ENCODE measurements at regions of chr2 and their contacts with region 1.

Region 1: DNA sequence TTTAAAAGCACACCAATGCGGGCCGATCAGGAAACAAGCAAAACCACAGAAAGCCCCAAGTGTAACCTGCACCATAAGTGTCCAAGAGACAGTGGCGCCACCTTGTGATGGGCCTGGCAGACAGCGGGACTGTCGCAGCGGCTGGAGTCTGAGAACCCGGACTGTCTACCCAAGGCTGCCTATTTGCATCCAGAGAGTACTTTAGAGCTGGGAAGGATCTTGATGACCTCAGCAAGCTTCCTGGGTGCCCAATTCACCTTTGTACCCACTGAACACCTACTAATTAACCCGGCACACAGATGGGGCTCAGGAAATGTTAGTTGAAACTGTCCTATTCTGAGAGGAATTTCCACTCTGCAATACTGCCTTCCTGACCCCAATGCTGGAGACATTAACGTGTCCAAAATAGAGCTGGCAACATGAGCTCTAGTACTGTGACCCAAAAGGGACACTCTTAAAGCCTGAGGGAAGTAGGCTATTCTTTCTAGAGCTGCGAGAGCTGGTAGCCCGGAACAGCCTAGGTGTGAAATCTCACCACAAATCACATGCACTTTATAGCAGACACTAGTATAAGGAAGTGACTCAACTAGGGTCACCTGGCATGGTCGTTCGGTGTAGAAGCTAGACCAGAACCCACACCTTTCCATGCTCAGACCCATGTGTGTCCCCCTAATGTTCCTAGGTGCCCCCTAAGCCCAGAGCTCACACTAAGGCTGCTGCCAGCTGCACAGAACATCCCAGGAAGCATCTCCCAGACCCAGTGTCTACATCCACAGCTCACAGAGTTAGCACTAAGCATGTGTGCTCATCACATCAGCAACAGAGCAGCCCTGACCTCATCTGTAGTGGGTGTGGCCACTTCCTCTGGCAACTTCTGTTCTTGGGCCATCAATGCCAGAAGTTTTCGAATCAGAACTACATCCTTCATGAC is 25.4 kb downstream of the POLR1A start:
- DNase-seq: peak; percentile 88
- H3K4me3 Mint-ChIP-seq: no peak overlapping the region
- H3K27ac Mint-ChIP-seq: peak overlapping the region; percentile 90
- H3K4me1 Mint-ChIP-seq: peaks cover 48% of the 10 kb centered on the region
- H3K27me3 Mint-ChIP-seq: no peaks in the 10 kb centered on the region

Region 2: DNA sequence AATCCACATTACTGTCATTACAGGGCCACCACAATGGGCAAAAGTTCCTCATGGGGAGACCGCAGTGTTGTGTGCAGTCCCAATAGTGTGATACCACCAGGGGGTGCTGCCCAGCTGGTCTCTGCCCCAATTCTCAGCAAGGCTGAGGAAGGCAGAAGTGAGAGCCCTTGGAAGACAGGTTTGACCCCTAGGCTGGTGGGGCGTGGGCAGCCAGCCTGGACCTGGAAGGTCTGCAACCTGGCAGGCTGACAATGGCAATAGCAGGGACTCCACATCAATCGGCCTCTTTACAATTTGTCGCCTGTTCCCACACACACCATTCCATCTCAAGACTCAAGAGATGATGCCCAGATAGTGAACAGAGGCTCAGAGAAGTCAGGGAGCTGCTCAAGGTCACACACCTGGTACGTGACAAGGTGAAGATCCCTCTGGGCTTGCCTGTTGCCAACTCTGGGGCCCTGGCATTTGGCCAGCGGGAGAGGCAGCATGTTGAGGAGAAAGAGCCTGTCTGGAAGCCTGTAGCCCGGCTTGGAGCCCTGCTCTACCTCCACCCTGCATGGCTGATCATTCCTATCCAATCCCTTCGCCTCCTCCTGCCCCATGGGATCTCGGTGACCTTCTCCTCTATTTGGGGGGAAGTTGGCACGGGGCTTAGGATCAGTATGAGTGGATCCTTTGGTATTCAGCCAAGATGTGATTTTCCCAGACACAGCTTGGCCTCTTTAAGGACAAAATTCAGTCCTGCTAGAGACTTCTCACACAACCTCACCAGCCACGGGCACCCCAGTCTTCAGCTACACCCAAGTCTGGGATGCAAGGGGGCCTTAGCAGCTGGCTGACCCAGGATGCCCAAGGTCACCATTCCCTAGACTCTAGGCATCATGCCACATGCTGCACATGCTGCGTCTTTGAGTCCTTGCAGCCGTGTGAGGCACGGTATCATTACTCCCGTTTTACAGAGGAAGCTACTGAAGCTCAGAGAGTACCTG is 329.4 kb before region 1 on chr2:
- CTCF ChIA-PET with region 1: interaction called, 29 read pairs
- POLR2A ChIA-PET with region 1: no interaction called
- DNase-seq: peak; percentile 68
- H3K4me3 Mint-ChIP-seq: no peak overlapping the region
- H3K27ac Mint-ChIP-seq: no peak overlapping the region
- H3K4me1 Mint-ChIP-seq: peaks cover 19% of the 10 kb centered on the region
- H3K27me3 Mint-ChIP-seq: peaks cover 85% of the 10 kb centered on the region

Region 3: GRCh38 chr2:85852937-85853498 is 227.2 kb before region 1 on chr2:
- CTCF ChIA-PET with region 1: interaction called, 12 read pairs
- POLR2A ChIA-PET with region 1: interaction called, 10 read pairs
- DNase-seq: peak; percentile 80
- H3K4me3 Mint-ChIP-seq: peak overlapping the region; percentile 84
- H3K27ac Mint-ChIP-seq: peak overlapping the region; percentile 100
- H3K4me1 Mint-ChIP-seq: peaks cover 70% of the 10 kb centered on the region
- H3K27me3 Mint-ChIP-seq: no peaks in the 10 kb centered on the region

Region 4: GRCh38 chr2:85865539-85866164 is 214.6 kb before region 1 on chr2:
- CTCF ChIA-PET with region 1: interaction called, 12 read pairs
- POLR2A ChIA-PET with region 1: interaction called, 3 read pairs
- DNase-seq: no peak
- H3K4me3 Mint-ChIP-seq: no peak overlapping the region
- H3K27ac Mint-ChIP-seq: no peak overlapping the region
- H3K4me1 Mint-ChIP-seq: peaks cover 64% of the 10 kb centered on the region
- H3K27me3 Mint-ChIP-seq: no peaks in the 10 kb centered on the region

Region 5: DNA sequence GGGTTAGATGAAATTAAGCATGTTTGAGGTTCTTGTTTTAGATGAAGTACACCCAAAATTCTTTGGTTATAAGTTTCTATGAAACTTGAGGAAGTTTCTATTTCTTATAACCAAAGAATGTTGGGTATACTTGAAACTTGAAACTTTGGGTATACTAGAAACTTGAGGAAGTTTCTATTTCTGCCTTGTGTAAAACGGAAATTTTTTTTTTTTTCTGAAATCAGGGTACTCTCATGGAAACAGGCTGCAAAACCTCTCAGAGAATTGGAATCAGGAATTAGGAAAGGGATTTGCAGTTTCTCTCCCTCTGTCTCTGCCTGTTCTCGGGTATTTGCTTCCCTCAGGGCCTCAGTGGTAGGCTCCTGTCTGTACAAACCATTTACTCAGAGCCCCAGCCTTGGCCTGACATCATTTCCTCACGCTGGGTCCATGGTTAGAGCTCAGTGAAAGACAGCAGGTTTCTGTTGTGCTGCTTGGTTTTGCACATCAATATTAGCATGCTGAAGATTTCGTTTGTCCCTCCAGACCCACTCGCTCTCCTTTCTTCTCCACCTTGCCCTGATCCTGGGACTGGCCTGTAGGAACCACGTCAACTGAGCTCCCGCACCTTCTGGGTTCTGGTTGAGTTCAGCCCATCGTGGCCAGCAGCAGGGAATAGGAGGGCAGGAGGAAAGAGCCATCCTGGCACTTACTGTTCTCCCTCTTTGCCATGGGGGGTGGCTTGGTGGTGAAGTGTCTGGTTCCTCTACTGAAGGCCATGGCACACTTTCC is 81.0 kb before region 1 on chr2:
- CTCF ChIA-PET with region 1: interaction called, 15 read pairs
- POLR2A ChIA-PET with region 1: interaction called, 5 read pairs
- DNase-seq: peak; percentile 74
- H3K4me3 Mint-ChIP-seq: peak overlapping the region; percentile 3
- H3K27ac Mint-ChIP-seq: peak overlapping the region; percentile 91
- H3K4me1 Mint-ChIP-seq: peaks cover 74% of the 10 kb centered on the region
- H3K27me3 Mint-ChIP-seq: no peaks in the 10 kb centered on the region

Region 6: DNA sequence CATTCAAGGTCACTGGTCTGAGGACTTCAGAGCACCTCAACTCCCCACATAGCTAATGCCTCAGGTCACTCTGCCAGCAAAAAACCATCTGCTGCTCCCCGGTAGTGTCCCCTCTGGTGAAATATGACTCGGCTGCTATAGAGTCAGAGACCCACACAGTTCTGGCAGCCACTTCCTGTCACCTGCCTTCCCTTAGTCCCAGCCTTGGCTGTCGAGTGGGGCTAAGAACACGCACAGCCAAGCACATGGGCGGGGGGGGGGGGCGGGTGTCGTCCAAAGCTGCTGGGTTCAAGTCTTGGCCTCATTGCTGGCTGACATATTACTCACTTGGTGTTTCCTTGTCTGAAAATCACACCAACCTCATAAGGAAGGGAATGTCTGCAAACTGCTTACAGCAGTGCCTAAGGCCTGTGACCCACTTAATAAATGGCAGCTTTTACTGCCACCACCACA is 12.1 kb before region 1 on chr2:
- CTCF ChIA-PET with region 1: interaction called, 13 read pairs
- POLR2A ChIA-PET with region 1: interaction called, 6 read pairs
- DNase-seq: peak; percentile 74
- H3K4me3 Mint-ChIP-seq: no peak overlapping the region
- H3K27ac Mint-ChIP-seq: peak overlapping the region; percentile 76
- H3K4me1 Mint-ChIP-seq: peaks cover 33% of the 10 kb centered on the region
- H3K27me3 Mint-ChIP-seq: no peaks in the 10 kb centered on the region

Region 7: GRCh38 chr2:86105252-86105968 is 25.2 kb after region 1 on chr2 and contains the start of gene POLR1A:
- CTCF ChIA-PET with region 1: interaction called, 17 read pairs
- POLR2A ChIA-PET with region 1: interaction called, 21 read pairs
- DNase-seq: peak; percentile 89
- H3K4me3 Mint-ChIP-seq: peak within 1 kb of the TSS; percentile 80
- H3K27ac Mint-ChIP-seq: peak within 1 kb of the TSS; percentile 92
- H3K4me1 Mint-ChIP-seq: peaks cover 58% of the 10 kb centered on the region
- H3K27me3 Mint-ChIP-seq: no peaks in the 10 kb centered on the region
- total RNA-seq, gene POLR1A: 25.2 to 29.7 TPM